ENCODE measurements at regions of chr2 and their contacts with region 1.

Region 1: DNA sequence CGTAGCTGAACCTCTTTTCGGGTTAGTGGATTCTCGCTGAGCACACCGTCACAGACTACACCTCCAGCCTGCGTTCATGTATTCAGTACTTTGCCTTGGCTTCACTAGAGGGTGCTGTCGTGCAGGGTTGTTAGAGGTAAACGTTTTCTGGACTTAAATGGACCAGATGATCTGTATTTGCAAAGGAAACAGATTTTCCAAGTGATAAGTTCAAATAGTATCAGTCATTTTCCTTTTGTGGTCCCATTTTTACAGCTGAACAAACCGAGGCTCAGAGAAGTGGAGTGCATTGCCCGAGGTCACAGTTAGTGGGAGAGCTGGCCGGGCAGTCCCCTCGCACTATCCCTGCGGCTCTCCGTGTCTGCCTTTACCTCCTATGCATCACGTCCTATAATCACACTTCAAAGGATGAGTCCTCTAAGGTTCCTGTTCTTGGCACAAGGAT is 125.9 kb downstream of the MAP4K4 start:
- DNase-seq: peak; percentile 66
- H3K4me3 ChIP-seq: no peak overlapping the region
- H3K27ac ChIP-seq: no peak overlapping the region
- H3K4me1 ChIP-seq: peaks cover 13% of the 10 kb centered on the region
- H3K27me3 ChIP-seq: no peaks in the 10 kb centered on the region
- CTCF ChIP-seq: peak in 2 of 3 experiments; percentile 22 to 23
- POLR2A ChIP-seq: no peak

Region 2: GRCh38 chr2:101518578-101519492 is 304.5 kb before region 1 on chr2:
- intact Hi-C with region 1: loop called (anchors 10 kb)
- DNase-seq: peak; percentile 65
- H3K4me3 ChIP-seq: no peak overlapping the region
- H3K27ac ChIP-seq: no peak overlapping the region
- H3K4me1 ChIP-seq: peaks cover 7% of the 10 kb centered on the region
- H3K27me3 ChIP-seq: no peaks in the 10 kb centered on the region
- CTCF ChIP-seq: peak in 1 of 3 experiments; percentile 29
- POLR2A ChIP-seq: no peak

Region 3: DNA sequence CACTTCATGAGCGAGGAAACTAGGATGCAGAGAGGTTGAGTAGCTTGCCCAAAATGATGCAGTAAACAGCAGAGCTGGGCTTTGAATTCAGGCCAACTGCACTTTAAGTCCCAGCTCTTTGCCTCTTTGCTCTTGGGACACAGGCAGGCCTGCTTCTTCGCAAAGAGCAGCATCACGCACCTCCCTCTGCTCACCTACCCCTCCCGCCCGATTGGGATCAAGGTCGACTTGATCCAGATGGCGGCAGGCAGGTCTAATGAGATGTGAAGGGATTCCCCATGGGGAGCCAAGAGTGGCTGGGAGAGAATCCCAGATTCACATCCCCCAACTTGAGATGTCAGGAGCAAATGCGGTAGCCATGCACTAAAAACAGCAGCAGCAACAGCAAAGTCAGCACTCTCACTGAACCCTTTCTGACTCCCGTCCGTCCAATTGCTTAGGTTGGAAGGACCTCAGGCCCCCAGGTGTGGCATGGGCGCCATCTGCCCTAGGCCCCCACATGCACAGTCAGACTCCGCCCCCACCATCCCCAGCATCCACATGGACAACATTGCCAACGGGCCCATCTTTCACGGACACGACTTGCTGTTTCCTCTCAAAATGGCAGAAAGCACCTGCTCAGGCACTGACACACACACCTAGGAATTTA is 210.2 kb before region 1 on chr2:
- intact Hi-C with region 1: no loop called
- DNase-seq: no peak
- H3K4me3 ChIP-seq: no peak overlapping the region
- H3K27ac ChIP-seq: no peak overlapping the region
- H3K4me1 ChIP-seq: no peaks in the 10 kb centered on the region
- H3K27me3 ChIP-seq: no peaks in the 10 kb centered on the region
- CTCF ChIP-seq: no peak
- POLR2A ChIP-seq: no peak

Region 4: DNA sequence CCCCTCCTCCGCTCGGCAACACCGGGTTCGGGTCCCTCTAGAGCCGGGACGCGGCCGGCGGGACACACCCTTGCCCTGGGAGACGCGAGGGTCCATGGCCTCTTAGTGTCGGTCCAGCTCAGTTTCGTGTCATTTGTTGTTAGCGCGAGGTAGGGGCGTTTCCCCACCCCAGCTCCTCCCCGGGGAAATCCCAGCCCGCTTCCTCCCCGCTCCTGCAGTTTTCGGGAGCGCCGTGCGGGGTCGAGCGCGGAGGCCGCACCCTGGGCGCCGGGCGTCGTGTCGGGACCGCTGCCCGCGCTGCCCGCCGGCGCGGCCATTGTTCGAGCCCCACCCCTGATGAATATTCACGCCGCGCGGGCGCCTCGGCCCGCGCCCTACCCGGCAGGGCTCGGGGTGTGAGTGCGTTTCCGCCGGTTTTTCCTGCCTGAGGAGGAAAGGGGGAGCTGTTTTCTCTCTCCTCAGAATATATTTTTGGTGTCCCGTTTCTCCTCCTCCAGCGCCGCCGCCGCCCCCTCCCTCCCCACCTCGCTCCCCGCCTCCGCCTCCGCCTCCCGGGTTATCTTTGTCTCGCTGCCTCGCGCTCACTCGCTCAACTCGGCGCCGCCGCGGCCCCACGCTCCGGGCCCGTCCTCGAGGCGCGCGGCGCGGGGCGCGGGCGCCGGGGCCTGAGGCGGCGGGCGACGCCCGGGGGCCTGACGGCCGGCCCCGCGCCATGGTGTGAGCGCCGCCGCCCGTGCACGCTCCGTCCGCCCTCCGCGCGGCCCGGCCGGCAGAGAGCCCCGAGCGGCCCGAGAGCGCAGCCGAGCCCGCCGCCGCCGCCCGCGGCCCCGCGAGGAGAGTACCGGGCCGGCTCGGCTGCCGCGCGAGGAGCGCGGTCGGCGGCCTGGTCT is 126.0 kb before region 1 on chr2 and contains the start of gene MAP4K4:
- intact Hi-C with region 1: loop called (anchors 5 kb)
- DNase-seq: peak; percentile 89
- H3K4me3 ChIP-seq: peak within 1 kb of the TSS; percentile 73 to 81
- H3K27ac ChIP-seq: peak within 1 kb of the TSS; percentile 83 to 90
- H3K4me1 ChIP-seq: peaks cover 10% of the 10 kb centered on the region
- H3K27me3 ChIP-seq: no peaks in the 10 kb centered on the region
- CTCF ChIP-seq: peak in 1 of 3 experiments; percentile 21
- POLR2A ChIP-seq: no peak
- total RNA-seq, gene MAP4K4: 174 to 194 TPM

Region 5: GRCh38 chr2:101736861-101737291 is 86.5 kb before region 1 on chr2:
- intact Hi-C with region 1: no loop called
- DNase-seq: no peak
- H3K4me3 ChIP-seq: no peak overlapping the region
- H3K27ac ChIP-seq: peak overlapping the region in 1 of 2 donors; percentile 21
- H3K4me1 ChIP-seq: peaks cover 36% of the 10 kb centered on the region
- H3K27me3 ChIP-seq: no peaks in the 10 kb centered on the region
- CTCF ChIP-seq: no peak
- POLR2A ChIP-seq: no peak

Measured in testis (tissue), 5 donors.